ENCODE measurements at regions of chr1 and their contacts with region 1.

Region 1: GRCh38 chr1:160590488-160590887 is 11.2 kb upstream of the CD84 start:
- DNase-seq: no peak
- ATAC-seq: no peak
- H3K4me3 ChIP-seq: no peak overlapping the region
- H3K4me3 Mint-ChIP-seq: no peak overlapping the region
- H3K27ac ChIP-seq: no peak overlapping the region
- H3K27ac Mint-ChIP-seq: no peak overlapping the region
- H3K4me1 ChIP-seq: peaks cover 4% of the 10 kb centered on the region
- H3K4me1 Mint-ChIP-seq: peaks cover 13% of the 10 kb centered on the region
- H3K27me3 ChIP-seq: no peaks in the 10 kb centered on the region
- H3K27me3 Mint-ChIP-seq: no peaks in the 10 kb centered on the region
- CTCF ChIP-seq: no peak

Region 2: DNA sequence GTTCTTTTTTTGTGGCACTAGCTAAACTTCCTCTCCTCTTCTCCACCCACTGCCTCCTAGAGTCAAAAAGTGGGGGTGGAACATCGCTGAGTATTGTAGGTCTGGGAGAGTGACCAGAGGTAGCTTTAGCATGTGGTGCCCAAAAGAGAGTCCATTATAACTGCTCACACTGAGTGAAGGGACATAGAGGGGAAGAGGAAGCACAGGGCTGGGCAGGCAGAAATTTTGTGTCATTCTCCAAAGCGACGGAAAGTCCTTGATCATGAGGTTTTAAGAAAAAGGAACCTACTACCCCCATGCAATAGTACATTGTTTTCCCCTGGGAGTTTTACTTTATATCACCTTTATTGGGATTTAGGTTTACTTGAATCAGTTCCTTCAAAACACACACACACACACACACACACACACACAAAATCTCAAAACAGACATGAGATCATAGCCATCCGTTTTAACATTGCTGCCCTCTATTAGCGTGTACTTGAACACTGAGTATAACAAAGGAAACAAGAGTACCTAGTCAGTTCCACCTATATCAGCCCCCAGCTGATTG is 15.3 kb before region 1 on chr1:
- CTCF ChIA-PET with region 1: interaction called, 3 read pairs
- POLR2A ChIA-PET with region 1: interaction called, 3 read pairs
- intact Hi-C with region 1: loop called in 1 of 2 experiments (anchors 2 kb)
- DNase-seq: peak in 2 of 9 experiments; percentile 31 to 52
- ATAC-seq: no peak
- H3K4me3 ChIP-seq: peak overlapping the region; percentile 20 to 50
- H3K4me3 Mint-ChIP-seq: peak overlapping the region; percentile 92
- H3K27ac ChIP-seq: peak overlapping the region; percentile 8 to 72
- H3K27ac Mint-ChIP-seq: peak overlapping the region; percentile 91
- H3K4me1 ChIP-seq: peaks cover 83% of the 10 kb centered on the region
- H3K4me1 Mint-ChIP-seq: peaks cover 85% of the 10 kb centered on the region
- H3K27me3 ChIP-seq: no peaks in the 10 kb centered on the region
- H3K27me3 Mint-ChIP-seq: no peaks in the 10 kb centered on the region
- CTCF ChIP-seq: no peak

Region 3: GRCh38 chr1:160637821-160638539 is 47.5 kb after region 1 on chr1:
- CTCF ChIA-PET with region 1: no interaction called
- POLR2A ChIA-PET with region 1: no interaction called
- intact Hi-C with region 1: loop called in 1 of 2 experiments (anchors 1 kb)
- DNase-seq: peak in 7 of 9 experiments; percentile 39 to 91 (median 62)
- ATAC-seq: peak; percentile 69
- H3K4me3 ChIP-seq: peak overlapping the region; percentile 9 to 18
- H3K4me3 Mint-ChIP-seq: peak overlapping the region; percentile 78
- H3K27ac ChIP-seq: peak overlapping the region; percentile 20 to 69
- H3K27ac Mint-ChIP-seq: peak overlapping the region; percentile 95
- H3K4me1 ChIP-seq: peaks cover 91% of the 10 kb centered on the region
- H3K4me1 Mint-ChIP-seq: peaks cover 96% of the 10 kb centered on the region
- H3K27me3 ChIP-seq: no peaks in the 10 kb centered on the region
- H3K27me3 Mint-ChIP-seq: no peaks in the 10 kb centered on the region
- CTCF ChIP-seq: no peak

Measured in CD8-positive, alpha-beta T cell (primary cell).